ENCODE measurements at regions of chr17 and their contacts with region 1.

Region 1: DNA sequence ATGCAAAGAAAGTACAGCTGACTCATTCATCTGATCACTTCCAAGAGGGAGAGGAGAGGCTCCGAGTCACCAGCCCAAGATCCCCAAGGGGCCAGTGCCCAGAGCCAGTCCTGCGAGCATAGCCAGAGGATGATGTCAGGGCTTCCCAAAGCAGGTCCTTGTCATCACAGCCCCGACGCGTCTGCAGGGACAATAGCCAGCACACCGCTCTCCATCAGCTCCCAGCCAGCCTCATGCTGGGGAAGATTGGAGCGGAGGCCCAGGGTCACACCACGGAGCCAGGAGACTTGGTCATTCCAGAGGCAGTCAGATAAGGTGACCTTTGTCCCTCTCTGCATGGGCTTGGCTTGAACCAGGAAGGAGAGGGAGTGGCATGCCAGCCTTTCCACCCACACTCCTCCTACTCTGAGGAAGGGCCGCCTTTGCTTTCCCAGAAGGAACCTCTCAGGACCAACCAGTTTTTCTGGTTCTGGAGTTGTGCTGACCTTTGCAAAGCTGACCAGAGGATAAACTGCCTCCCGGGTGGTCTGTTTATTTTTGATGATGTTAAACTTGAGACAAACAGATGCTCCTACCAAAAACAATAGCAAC is 58.3 kb upstream of the ARHGAP44 start:
- DNase-seq: peak; percentile 84
- ATAC-seq: peak; percentile 87

Region 2: DNA sequence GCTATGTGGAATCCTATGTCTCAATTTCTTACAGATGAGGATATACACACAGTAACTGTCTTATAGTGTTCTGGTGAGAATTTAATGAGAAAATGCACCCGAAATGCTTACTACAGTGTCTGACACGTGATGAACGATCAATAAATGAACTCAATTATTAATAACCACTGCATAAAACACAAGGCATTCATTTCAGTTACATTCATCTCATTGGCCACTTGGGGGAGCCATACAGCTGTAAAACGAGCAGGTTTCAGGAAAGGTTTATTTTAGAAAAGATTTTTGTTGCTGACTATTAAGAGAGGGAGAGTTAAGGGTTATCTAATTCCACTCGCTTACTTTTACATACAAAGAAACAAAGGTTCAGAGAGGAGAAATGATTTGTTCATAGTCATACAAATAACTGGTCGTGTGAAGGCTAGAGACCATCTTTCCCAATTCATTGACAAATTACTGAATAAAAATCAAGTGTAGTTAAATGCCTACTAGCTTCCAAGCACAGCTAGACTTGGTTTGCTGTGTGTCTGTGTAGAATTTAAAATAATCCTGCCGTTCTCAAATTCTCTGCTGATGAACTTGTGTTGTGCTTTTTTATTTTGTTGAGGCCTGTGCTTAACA is 550.3 kb before region 1 on chr17:
- intact Hi-C with region 1: loop called (anchors 10 kb)
- DNase-seq: no peak
- ATAC-seq: no peak

Region 3: DNA sequence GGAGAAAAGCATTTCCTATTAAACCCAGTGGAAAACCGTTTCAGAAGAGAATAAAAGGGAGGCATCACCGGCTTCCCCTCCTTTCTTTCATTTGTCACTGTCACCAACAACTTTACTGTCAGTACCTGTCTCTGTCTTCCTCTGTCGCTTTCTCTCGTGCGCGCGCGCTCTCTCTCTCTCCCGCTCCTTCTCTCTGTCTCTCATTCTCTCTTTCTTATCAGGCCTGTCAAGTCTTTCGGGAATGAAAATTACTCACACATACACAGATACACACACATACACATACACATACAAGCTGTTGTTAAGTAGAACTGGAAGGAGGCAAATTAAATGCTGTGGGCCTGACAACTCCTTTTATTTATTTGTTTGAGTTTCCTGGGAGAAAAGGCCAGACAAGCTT is 47.7 kb before region 1 on chr17:
- intact Hi-C with region 1: loop called (anchors 2 kb)
- DNase-seq: no peak
- ATAC-seq: peak; percentile 68